ENCODE measurements at regions of chr1 and their contacts with region 1.

Region 1: GRCh38 chr1:201970334-201971159 is 11.9 kb upstream of the RNPEP start:
- DNase-seq: no peak
- ATAC-seq: no peak
- H3K4me3 Mint-ChIP-seq: no peak overlapping the region
- H3K27ac Mint-ChIP-seq: no peak overlapping the region
- H3K4me1 Mint-ChIP-seq: peaks cover 7% of the 10 kb centered on the region
- H3K27me3 Mint-ChIP-seq: peaks cover 12% of the 10 kb centered on the region

Region 2: DNA sequence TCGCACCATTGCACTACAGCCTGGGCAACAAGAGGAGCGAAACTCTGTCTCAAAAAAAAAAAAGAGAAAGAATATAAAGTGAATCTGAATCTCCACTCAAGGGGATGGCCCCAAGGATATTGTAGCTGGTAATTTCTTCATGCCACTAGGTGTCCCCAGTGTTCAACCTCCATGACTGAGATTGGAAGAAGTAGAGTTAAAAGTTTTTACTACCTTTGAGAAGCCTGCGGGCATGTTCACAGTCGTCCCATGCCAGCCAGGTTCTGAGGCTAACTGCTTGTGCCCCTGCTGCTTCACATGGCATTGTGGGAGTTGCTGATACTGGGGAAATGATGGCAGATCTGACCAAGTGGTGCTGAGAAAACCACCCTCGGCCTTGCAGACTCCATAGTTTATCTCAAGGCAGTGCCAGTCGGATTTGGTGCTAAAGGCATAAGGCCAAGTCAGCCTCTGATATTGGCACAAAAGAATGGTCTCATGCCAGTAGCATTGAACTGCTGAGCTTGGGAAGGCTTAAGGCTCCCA is 92.6 kb before region 1 on chr1:
- CTCF ChIA-PET with region 1: interaction called, 18 read pairs
- DNase-seq: peak; percentile 44
- ATAC-seq: peak; percentile 80
- H3K4me3 Mint-ChIP-seq: no peak overlapping the region
- H3K27ac Mint-ChIP-seq: no peak overlapping the region
- H3K4me1 Mint-ChIP-seq: no peaks in the 10 kb centered on the region
- H3K27me3 Mint-ChIP-seq: no peaks in the 10 kb centered on the region

Region 3: GRCh38 chr1:201946224-201946908 is 24.2 kb before region 1 on chr1 and contains the start of gene LMOD1:
- CTCF ChIA-PET with region 1: interaction called, 10 read pairs
- DNase-seq: no peak
- ATAC-seq: no peak
- H3K4me3 Mint-ChIP-seq: no peak within 1 kb of the TSS
- H3K27ac Mint-ChIP-seq: no peak within 1 kb of the TSS
- H3K4me1 Mint-ChIP-seq: peaks cover 13% of the 10 kb centered on the region
- H3K27me3 Mint-ChIP-seq: peaks cover 56% of the 10 kb centered on the region
- total RNA-seq, gene LMOD1: not detected

Region 4: DNA sequence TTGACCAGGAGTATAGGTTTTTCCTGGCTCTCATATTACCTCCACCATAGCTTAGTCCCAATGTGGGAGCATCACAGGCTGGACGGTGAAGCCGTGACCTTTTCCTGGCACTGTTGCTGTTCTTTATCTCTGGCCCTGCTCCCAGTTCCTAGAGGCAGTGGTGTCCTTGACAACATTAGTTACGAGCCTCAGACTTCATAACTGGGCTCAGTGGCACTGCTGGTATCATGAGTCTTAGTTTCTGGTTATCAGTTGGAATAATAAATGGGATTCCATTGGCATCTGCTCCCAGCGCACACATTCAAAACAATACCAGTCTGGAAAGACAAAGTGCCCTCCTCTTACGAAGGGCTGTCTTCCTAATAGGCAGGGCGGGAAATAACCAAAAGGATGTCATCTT is 19.9 kb after region 1 on chr1:
- CTCF ChIA-PET with region 1: no interaction called
- DNase-seq: no peak
- ATAC-seq: no peak
- H3K4me3 Mint-ChIP-seq: no peak overlapping the region
- H3K27ac Mint-ChIP-seq: no peak overlapping the region
- H3K4me1 Mint-ChIP-seq: no peaks in the 10 kb centered on the region
- H3K27me3 Mint-ChIP-seq: no peaks in the 10 kb centered on the region